IMR-90 (cell line): ENCODE measurements at regions of chr19 and their contacts with region 1.

Region 1: GRCh38 chr19:27748551-27749152 is 1464.3 kb downstream of the UQCRFS1 start:
- DNase-seq: peak; percentile 14
- ATAC-seq: peak; percentile 52
- H3K4me3 ChIP-seq: no peak overlapping the region
- H3K27ac ChIP-seq: no peak overlapping the region
- H3K4me1 ChIP-seq: peaks cover 2% of the 10 kb centered on the region; the same call in 1 of the 2 replicates
- H3K27me3 ChIP-seq: no peaks in the 10 kb centered on the region
- CTCF ChIP-seq: no peak
- POLR2A ChIP-seq: no peak
- RAD21 ChIP-seq: no peak

Region 2: GRCh38 chr19:27793644-27794493 is 45.2 kb after region 1 on chr19:
- CTCF ChIA-PET with region 1: no interaction called
- POLR2A ChIA-PET with region 1: no interaction called
- dilution Hi-C with region 1: no loop called
- in situ Hi-C with region 1: no loop called
- intact Hi-C with region 1: loop called (anchors 2 kb)
- DNase-seq: peak; percentile 93
- ATAC-seq: peak; percentile 96
- H3K4me3 ChIP-seq: peak overlapping the region; percentile 91
- H3K27ac ChIP-seq: peak overlapping the region; percentile 95
- H3K4me1 ChIP-seq: no peaks in the 10 kb centered on the region
- H3K27me3 ChIP-seq: no peaks in the 10 kb centered on the region
- CTCF ChIP-seq: no peak
- POLR2A ChIP-seq: no peak
- RAD21 ChIP-seq: no peak